ENCODE measurements at regions of chr9 and their contacts with region 1.

Region 1: DNA sequence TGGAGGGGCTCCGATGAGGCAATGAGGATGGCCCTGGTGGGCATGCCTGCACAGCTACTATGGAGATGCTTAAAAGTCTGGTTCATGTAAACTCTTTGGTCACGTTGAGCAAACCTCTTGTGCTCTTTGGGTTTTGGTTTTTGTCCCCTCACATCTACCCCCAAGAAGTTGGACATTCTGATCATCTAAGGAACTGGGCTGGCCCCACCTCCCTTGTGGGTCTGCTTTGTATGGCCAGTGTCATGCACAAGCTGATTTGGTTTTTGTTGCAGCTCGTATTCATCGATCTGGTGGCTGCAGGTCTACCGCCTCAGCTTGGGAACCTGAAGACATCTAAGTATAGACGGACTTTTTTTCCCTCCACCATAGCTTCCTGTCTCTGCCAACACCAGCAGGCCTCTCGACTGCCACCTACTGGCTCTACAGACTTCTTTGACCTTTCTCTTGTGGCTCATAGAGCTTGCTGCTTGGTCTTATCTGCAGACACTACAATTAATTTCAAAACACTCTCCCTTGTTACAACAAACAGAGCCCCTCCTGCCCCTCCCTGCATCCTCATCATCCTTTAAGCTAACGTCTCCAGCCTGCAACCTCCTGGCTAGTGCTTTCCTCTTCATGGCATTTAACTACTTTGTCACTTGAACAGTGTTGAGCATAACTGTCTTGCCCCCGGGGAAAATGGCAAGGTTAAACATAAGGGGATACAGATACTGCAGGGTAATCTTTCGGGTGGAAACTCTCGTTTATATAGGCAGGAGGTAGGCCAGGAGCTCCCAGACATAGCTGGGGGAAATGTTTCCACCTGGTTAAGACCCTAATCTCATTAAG is 34.5 kb downstream of the TSTD2 start:
- DNase-seq: peak; percentile 82
- H3K4me3 ChIP-seq: no peak overlapping the region
- H3K27ac ChIP-seq: no peak overlapping the region
- H3K4me1 ChIP-seq: no peaks in the 10 kb centered on the region
- H3K27me3 ChIP-seq: peaks cover 0 to 4% of the 10 kb centered on the region in 2 experiments
- CTCF ChIP-seq: peak; percentile 90 to 91
- POLR2A ChIP-seq: no peak

Region 2: DNA sequence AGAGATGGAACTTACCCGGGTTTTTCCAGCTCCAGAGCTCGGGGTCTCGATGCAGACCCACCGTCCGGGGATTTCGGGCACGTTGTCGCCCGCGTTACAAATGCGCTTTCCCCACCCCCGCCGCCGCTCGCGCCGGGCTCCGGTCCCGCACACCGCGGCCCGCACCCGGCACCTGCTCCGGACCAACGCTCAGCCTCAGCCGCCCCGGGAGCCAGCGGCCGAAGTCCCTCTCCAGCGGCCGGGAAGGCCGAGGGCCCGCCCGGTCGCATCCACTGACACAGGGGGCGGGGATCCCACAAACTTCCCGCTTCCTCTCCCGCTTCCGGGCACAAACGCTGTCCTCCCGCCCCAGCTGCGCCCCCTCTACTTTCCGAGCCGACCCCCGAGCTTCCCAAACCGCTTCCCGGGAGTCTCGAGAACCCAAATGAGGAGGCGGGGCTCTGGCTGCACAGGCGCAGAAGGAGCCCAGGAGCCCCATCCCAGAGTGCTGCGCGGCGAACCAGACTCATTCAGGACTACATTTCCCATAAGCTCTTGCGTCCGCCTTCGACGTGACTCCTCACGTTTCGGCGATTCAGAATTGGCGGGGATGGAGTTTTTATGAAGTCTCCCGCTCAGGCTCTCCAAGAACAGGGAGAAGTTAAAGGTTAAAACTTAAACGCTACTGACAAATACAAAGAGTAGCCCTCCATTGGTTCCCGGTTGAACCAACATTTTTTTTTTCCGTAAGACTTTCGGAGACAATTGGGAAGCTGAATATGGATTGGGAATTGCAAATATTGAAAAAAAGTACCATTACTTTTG is 744.4 kb before region 1 on chr9 and contains the start of gene ZNF782:
- CTCF ChIA-PET with region 1: interaction called, 25 read pairs
- POLR2A ChIA-PET with region 1: no interaction called
- dilution Hi-C with region 1: no loop called
- intact Hi-C with region 1: loop called (anchors 5 kb)
- DNase-seq: peak; percentile 95
- H3K4me3 ChIP-seq: peak within 1 kb of the TSS; percentile 56 to 86 (median 86)
- H3K27ac ChIP-seq: peak within 1 kb of the TSS; percentile 6
- H3K4me1 ChIP-seq: peaks cover 11% of the 10 kb centered on the region
- H3K27me3 ChIP-seq: peaks cover 0 to 2% of the 10 kb centered on the region in 2 experiments
- CTCF ChIP-seq: no peak
- POLR2A ChIP-seq: no peak
- total RNA-seq, gene ZNF782: 3.6 and 4.4 TPM in 2 replicates

Region 3: DNA sequence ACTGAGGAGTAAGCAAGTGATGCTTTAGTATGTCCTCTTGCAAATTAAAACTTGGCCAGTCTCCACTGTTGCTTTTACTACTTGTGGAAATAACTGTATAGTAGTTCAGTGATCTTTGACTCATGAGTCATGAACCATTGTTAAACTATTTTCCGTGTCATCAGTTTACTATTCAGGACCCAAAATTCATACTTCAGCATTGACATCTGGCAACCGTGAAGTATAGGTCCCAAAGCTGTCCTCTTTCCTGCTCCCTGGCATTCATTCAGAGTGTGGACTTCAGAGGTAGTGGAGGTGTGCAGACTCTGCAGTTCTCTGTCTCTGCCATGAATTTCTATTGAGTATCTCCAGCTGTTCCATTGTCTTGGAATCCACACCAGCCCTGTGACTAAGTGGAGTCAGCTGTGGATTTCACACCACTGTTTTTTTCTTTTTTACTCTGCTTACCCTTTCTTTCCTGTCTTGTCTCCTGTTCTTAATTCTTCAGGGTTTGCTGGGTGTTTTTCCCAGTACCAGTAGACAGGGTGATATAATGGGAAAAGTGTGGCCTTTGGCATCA is 179.3 kb before region 1 on chr9:
- CTCF ChIA-PET with region 1: interaction called, 79 read pairs
- POLR2A ChIA-PET with region 1: no interaction called
- dilution Hi-C with region 1: no loop called
- intact Hi-C with region 1: no loop called
- DNase-seq: peak; percentile 83
- H3K4me3 ChIP-seq: no peak overlapping the region
- H3K27ac ChIP-seq: peak overlapping the region; percentile 1
- H3K4me1 ChIP-seq: peaks cover 17% of the 10 kb centered on the region
- H3K27me3 ChIP-seq: no peaks in the 10 kb centered on the region
- CTCF ChIP-seq: no peak
- POLR2A ChIP-seq: no peak

Region 4: DNA sequence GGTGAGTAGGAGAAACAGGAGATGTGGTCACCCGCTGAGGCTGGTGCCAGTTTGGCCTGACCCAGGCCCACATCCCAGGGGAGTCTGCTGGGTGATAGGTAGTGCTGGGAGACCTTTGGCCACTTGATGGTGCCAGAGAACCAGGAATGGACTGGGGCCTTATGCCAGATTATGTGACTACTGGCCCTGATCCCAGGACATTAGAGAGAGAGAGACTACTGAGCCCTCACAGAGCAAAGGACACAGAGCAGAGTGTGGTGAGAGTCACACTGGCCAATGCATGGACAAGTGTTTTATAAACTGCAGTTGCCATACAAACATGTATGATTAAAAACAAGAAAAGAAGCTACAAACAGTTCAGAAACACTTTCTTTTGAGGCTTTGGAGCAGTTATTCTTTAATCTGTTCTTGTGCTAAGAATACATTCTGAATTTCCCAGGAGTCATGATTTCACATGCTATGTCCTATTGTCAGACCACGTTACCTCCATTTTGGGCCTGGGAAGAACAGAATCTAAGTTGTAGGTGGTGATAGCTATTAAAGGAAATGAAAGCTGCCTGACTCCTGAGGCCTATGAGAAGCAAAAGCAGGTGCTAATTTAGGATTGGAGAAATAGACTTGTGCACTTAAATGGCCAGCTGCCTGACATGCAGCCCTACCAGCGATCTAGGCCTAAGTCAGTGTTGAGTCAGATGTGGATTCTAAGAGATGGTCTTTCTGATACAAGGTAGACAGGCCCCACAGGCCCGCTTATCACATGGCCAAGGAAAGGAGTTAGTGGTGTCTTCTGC is 129.8 kb before region 1 on chr9:
- CTCF ChIA-PET with region 1: interaction called, 775 read pairs
- POLR2A ChIA-PET with region 1: no interaction called
- dilution Hi-C with region 1: loop called (anchors 25 kb)
- intact Hi-C with region 1: loop called (anchors 1 kb)
- DNase-seq: peak; percentile 77
- H3K4me3 ChIP-seq: no peak overlapping the region
- H3K27ac ChIP-seq: no peak overlapping the region
- H3K4me1 ChIP-seq: no peaks in the 10 kb centered on the region
- H3K27me3 ChIP-seq: no peaks in the 10 kb centered on the region
- CTCF ChIP-seq: peak; percentile 79 to 81
- POLR2A ChIP-seq: no peak

Region 5: GRCh38 chr9:97501177-97501971 is 97.3 kb before region 1 on chr9 and contains the start of gene TMOD1:
- CTCF ChIA-PET with region 1: interaction called, 51 read pairs
- POLR2A ChIA-PET with region 1: no interaction called
- dilution Hi-C with region 1: no loop called
- intact Hi-C with region 1: no loop called
- DNase-seq: peak; percentile 55
- H3K4me3 ChIP-seq: peak within 1 kb of the TSS; percentile 44 to 62 (median 52)
- H3K27ac ChIP-seq: no peak within 1 kb of the TSS
- H3K4me1 ChIP-seq: peaks cover 7% of the 10 kb centered on the region
- H3K27me3 ChIP-seq: peaks cover 46 to 65% of the 10 kb centered on the region in 2 experiments
- CTCF ChIP-seq: no peak
- POLR2A ChIP-seq: no peak
- total RNA-seq, gene TMOD1: 0.74 and 1.4 TPM in 2 replicates

Region 6: DNA sequence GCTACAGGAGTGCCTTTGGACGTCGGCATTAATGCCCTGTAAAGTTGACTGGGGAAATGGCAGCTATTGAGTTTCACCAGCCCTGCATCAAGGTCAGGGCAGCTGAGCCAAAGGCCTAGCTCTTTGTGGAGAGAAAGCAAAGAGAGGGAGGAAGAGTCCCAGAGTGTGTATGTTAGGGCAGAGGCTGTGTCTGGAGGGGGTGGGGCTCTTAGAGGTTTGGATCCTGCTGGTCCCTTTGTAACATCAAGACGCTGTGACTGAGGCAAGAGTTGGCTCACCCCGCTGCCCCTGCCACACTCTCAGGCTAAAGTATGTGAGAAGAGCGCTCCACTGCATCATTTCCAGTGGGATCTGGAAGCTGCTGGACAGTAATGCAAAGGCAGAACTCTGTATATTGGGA is 62.9 kb before region 1 on chr9:
- CTCF ChIA-PET with region 1: interaction called, 13 read pairs
- POLR2A ChIA-PET with region 1: no interaction called
- dilution Hi-C with region 1: no loop called
- intact Hi-C with region 1: no loop called
- DNase-seq: no peak
- H3K4me3 ChIP-seq: no peak overlapping the region
- H3K27ac ChIP-seq: no peak overlapping the region
- H3K4me1 ChIP-seq: no peaks in the 10 kb centered on the region
- H3K27me3 ChIP-seq: peaks cover 4 to 16% of the 10 kb centered on the region in 2 experiments
- CTCF ChIP-seq: no peak
- POLR2A ChIP-seq: no peak

Region 7: DNA sequence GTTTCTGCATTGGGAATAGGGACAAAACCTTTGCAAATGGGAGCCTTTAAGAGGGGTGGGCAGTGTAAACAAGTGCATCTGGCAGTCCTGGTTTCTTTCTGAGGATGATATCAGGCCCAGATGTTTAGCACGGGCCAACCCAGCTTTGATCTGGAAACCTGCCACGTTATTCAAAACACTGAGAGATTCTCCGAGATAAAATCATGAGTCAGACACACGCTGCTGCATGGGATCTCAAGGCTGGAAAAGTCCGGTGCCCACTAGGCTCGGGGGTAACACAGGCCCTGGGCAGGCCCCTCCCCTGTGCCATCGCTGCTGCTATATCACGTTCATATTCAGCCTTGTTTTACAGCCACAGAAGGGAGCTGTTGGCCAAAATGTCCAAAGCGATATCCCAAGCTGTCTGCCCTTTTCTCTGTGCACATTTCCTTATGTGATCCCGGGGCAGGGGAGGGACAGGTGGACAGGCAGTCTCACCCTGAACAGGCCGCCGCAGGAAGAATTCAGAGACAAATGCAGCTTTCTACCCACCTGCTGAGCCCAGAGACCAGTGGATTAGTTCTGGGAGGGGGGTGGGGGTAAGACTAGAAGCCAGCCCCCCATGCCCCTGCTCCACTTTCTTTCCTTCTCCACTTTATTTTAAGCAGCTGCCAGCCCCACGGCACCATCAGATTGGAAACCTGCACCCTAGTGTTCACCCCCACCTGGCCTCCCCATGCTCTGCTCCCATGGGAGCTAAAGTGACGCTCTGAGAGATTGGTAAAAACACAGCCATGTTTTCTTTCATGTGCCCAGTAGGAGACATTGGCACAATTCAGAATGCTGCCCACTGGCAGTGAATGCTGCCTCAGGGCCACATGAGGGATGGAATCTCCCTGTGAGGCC is 34.1 kb before region 1 on chr9:
- CTCF ChIA-PET with region 1: interaction called, 52 read pairs
- POLR2A ChIA-PET with region 1: no interaction called
- dilution Hi-C with region 1: no loop called
- intact Hi-C with region 1: loop called (anchors 2 kb)
- DNase-seq: peak; percentile 89
- H3K4me3 ChIP-seq: no peak overlapping the region
- H3K27ac ChIP-seq: no peak overlapping the region
- H3K4me1 ChIP-seq: peaks cover 16% of the 10 kb centered on the region
- H3K27me3 ChIP-seq: peaks cover 6 to 22% of the 10 kb centered on the region in 2 experiments
- CTCF ChIP-seq: no peak
- POLR2A ChIP-seq: no peak